Heart right ventricle (tissue), 16 donors: ENCODE measurements at regions of chr18 and their contacts with region 1.

Region 1: DNA sequence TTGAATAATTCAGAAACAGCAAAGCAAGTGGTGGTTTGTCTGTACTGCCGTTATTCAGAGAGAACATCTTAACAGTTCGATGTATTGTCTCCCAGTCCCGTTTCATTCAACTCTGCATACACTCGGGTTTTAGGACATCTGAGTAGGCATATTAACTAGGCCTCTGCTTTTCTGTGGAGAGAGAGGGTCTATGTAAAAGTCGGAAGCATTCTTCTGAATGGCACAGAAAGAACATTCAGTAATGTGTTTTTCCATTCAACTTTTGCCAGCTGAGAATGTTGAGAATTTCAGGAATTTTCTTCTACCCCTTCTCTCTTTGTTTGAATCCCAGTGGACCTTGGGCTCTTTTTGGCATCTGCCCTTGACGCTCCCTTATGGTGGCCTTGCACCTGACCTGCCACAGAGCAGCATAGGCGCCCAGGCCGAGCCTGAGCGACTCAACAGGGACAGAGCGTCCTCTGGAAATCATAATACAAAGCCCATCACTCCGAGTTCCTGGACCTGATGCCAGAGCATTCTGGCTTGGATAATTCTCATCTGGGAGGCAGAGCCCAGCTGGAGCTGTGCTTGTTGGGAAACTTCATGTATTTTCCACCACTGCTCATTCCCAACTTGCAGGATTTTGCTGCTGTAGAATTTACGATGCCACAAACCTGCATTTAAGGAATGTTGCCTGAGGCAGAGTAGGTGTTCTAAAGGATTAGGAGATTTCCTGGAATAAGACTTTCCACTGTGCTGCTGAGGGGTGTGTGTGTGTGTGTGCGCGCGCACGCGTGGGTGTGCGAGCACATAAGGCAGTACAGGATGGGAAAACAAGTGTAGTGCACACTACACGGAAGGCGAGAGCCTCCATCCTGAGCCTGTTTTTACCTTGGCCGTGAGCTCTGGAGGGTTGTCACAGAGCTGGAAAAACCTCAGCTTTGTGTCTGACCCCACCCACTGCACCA is 77.2 kb upstream of the TXNDC2 start:
- DNase-seq: no peak
- ATAC-seq: peak in 7 of 8 donors; percentile 41 to 87 (median 57)
- H3K4me3 ChIP-seq: peak overlapping the region in 1 of 10 donors; percentile 16
- H3K27ac ChIP-seq: peak overlapping the region; percentile 9 to 80 (median 62)
- H3K4me1 ChIP-seq: peaks cover 15 to 56% (median 45%) of the 10 kb centered on the region in 9 donors
- H3K27me3 ChIP-seq: no peaks in the 10 kb centered on the region
- CTCF ChIP-seq: no peak

Region 2: DNA sequence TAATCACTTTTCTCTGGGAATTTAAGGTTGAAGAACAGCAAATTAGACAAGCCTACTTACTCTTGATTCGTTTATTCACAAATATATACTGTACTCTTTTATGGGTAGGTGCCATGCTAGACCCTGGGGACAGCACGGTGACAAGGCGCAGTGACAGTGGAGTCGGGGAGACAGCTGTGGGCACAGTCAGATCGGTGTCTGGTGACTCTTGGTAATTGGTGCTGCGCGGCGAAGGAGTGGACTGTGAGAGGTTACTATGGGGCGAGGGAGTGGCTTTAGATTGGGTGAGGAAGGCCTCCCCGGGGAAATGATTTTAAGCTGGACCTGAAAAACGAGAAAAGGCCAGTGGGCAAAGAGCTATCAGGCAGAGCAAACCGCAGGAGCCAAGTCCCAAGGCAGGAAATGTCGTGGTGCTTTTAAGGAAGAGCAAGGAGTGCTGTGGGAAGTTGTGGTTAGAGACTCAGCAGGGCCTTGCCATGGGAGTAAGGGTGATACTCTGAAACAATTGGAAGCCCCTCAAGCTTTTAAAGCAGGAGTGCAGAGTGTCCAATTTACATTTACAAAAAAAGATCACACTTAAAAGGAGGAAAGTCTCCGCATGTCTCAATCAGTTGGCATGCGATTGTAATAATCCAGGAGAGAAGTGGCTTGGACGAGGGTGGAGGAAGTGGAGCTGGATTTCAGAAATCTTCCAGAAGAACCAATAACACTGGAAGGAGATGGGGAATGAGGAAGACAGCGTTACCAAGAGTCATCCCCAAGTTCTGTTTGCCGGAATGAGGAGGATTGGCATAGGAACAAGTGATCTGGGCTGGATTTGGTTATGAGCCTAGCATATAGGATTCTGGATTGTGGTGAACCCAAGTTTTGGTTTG is 41.1 kb after region 1 on chr18:
- intact Hi-C with region 1: loop called in 1 of 10 experiments (anchors 10 kb)
- DNase-seq: peak; percentile 43 to 44
- ATAC-seq: peak; percentile 72 to 87 (median 78)
- H3K4me3 ChIP-seq: peak overlapping the region in 1 of 10 donors; percentile 11
- H3K27ac ChIP-seq: peak overlapping the region in 8 of 10 donors; percentile 29 to 84 (median 50)
- H3K4me1 ChIP-seq: peaks cover 6 to 72% (median 32%) of the 10 kb centered on the region in 9 donors
- H3K27me3 ChIP-seq: no peaks in the 10 kb centered on the region
- CTCF ChIP-seq: no peak